Ovary (tissue), 10 donors: ENCODE measurements at regions of chr11 and their contacts with region 1.

Region 1: DNA sequence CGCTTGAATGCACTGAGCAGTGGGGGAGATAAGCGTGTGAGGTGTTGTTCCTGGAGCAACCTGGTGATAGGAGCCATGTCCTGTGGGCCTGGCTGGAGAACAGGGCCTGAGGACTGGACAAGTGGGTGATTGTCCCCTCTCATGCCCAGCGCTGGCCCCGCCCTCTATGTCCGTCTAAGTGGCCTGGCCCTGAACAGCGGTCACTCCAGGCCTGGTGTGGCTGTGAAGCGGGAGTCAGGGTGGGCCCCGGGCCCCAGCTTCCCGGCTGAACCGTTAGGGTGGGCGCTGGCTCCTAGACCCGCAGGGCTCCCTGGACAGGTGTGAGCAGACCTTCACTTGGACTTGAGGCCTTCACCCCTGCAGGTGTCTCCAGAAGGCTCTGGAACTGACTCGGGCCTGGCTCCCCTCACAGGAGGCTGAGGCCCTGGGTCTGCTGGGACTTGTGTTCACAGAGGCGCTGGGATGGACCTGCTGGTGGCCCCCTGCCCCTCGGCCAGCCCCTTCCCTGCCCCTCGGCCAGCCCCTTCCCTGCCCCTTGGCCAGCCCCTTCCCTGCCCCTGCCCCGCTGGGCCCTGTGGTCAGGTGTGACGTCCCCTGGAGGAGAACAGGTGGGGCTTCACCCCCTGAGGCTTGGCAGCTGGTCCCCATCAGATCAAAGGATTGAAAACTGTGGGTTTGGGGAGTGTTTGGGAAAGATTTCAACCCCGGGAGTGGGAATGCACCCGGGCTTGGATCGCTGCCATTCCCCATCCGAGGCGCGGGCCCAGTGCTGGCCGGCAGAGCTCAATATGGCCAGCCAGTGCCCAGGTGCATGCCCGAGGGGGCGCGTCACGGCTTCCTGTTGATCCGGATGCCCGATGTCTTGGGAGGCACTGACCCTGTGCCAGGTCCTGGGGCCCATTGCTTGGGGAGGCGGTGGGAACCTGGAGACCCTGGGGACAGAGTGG is 3.2 kb upstream of the MUC6 start:
- DNase-seq: no peak
- H3K4me3 ChIP-seq: no peak overlapping the region
- H3K27ac ChIP-seq: no peak overlapping the region
- H3K4me1 ChIP-seq: peaks cover 2% of the 10 kb centered on the region
- H3K27me3 ChIP-seq: no peaks in the 10 kb centered on the region
- CTCF ChIP-seq: no peak
- EP300 ChIP-seq: no peak
- POLR2A ChIP-seq: no peak

Region 2: GRCh38 chr11:925496-926321 is 114.0 kb before region 1 on chr11 and contains the start of gene AP2A2:
- intact Hi-C with region 1: loop called in 1 of 4 experiments (anchors 5 kb)
- DNase-seq: peak; percentile 87 to 95 (median 93)
- H3K4me3 ChIP-seq: peak within 1 kb of the TSS; percentile 99
- H3K27ac ChIP-seq: peak within 1 kb of the TSS; percentile 66 to 91
- H3K4me1 ChIP-seq: peaks cover 8% of the 10 kb centered on the region
- H3K27me3 ChIP-seq: no peaks in the 10 kb centered on the region
- CTCF ChIP-seq: peak; percentile 34 to 97 (median 96)
- EP300 ChIP-seq: no peak
- POLR2A ChIP-seq: peak; percentile 69
- total RNA-seq, gene AP2A2: 27.7 to 80.1 (median 54.0) TPM